Activated CD8-positive, alpha-beta T cell treated with anti-CD3 and anti-CD28 coated beads for 36 hours (primary cell): ENCODE measurements at regions of chr9 and their contacts with region 1.

Region 1: GRCh38 chr9:22119537-22120158 is 110.5 kb upstream of the CDKN2B start:
- DNase-seq: peak; percentile 33
- ATAC-seq: peak; percentile 80
- H3K4me3 Mint-ChIP-seq: no peak overlapping the region
- H3K27ac Mint-ChIP-seq: no peak overlapping the region
- H3K4me1 Mint-ChIP-seq: peaks cover 3% of the 10 kb centered on the region
- H3K27me3 Mint-ChIP-seq: peaks cover 18% of the 10 kb centered on the region
- CTCF ChIP-seq: peak; percentile 40

Region 2: DNA sequence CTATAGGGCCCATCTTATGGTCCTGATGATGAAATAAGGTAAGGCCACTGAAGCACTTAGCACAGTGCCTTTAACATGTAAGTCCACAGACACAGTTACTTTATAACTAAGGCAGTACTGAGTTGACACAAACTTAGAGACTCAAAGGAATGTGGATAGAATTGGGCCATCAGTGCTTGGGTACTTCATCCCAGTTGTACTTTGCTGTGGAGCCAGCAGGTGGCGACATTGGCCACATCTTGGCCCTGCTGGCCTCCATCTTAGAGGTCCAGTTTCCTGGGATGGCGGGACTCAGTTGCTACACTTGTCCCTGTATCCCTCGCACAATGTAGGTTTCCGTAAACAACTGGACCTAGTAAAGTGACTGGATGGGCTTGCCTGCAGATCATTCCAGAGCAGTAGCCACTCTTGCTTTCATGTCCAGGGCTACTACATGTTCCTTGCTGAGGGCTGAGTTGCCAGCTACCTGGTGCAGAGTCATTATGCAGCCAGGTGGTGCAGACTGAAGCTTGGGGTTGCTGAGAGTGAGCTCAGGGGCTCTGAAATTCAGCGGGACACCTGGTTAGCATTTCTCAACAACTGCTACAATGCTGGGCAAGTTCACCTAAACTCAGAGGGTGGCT is 306.6 kb before region 1 on chr9:
- CTCF ChIA-PET with region 1: interaction called, 71 read pairs
- POLR2A ChIA-PET with region 1: no interaction called
- intact Hi-C with region 1: loop called (anchors 2 kb)
- DNase-seq: peak; percentile 72
- ATAC-seq: peak; percentile 71
- H3K4me3 Mint-ChIP-seq: no peak overlapping the region
- H3K27ac Mint-ChIP-seq: peak overlapping the region; percentile 69
- H3K4me1 Mint-ChIP-seq: peaks cover 42% of the 10 kb centered on the region
- H3K27me3 Mint-ChIP-seq: no peaks in the 10 kb centered on the region
- CTCF ChIP-seq: peak; percentile 85

Region 3: GRCh38 chr9:22052376-22052945 is 67.2 kb before region 1 on chr9:
- CTCF ChIA-PET with region 1: interaction called, 14 read pairs
- POLR2A ChIA-PET with region 1: interaction called, 3 read pairs
- intact Hi-C with region 1: loop called (anchors 5 kb)
- DNase-seq: peak; percentile 76
- ATAC-seq: peak; percentile 89
- H3K4me3 Mint-ChIP-seq: no peak overlapping the region
- H3K27ac Mint-ChIP-seq: peak overlapping the region; percentile 65
- H3K4me1 Mint-ChIP-seq: peaks cover 34% of the 10 kb centered on the region
- H3K27me3 Mint-ChIP-seq: no peaks in the 10 kb centered on the region
- CTCF ChIP-seq: no peak

Region 4: GRCh38 chr9:22105005-22105722 is 14.5 kb before region 1 on chr9:
- CTCF ChIA-PET with region 1: interaction called, 25 read pairs
- POLR2A ChIA-PET with region 1: no interaction called
- intact Hi-C with region 1: no loop called
- DNase-seq: peak; percentile 48
- ATAC-seq: peak; percentile 97
- H3K4me3 Mint-ChIP-seq: no peak overlapping the region
- H3K27ac Mint-ChIP-seq: no peak overlapping the region
- H3K4me1 Mint-ChIP-seq: peaks cover 16% of the 10 kb centered on the region
- H3K27me3 Mint-ChIP-seq: peaks cover 3% of the 10 kb centered on the region
- CTCF ChIP-seq: no peak

Region 5: GRCh38 chr9:22238809-22239684 is 119.4 kb after region 1 on chr9:
- CTCF ChIA-PET with region 1: interaction called, 11 read pairs
- POLR2A ChIA-PET with region 1: no interaction called
- intact Hi-C with region 1: loop called (anchors 10 kb)
- DNase-seq: no peak
- ATAC-seq: no peak
- H3K4me3 Mint-ChIP-seq: no peak overlapping the region
- H3K27ac Mint-ChIP-seq: no peak overlapping the region
- H3K4me1 Mint-ChIP-seq: peaks cover 53% of the 10 kb centered on the region
- H3K27me3 Mint-ChIP-seq: peaks cover 5% of the 10 kb centered on the region
- CTCF ChIP-seq: peak; percentile 34

Region 6: DNA sequence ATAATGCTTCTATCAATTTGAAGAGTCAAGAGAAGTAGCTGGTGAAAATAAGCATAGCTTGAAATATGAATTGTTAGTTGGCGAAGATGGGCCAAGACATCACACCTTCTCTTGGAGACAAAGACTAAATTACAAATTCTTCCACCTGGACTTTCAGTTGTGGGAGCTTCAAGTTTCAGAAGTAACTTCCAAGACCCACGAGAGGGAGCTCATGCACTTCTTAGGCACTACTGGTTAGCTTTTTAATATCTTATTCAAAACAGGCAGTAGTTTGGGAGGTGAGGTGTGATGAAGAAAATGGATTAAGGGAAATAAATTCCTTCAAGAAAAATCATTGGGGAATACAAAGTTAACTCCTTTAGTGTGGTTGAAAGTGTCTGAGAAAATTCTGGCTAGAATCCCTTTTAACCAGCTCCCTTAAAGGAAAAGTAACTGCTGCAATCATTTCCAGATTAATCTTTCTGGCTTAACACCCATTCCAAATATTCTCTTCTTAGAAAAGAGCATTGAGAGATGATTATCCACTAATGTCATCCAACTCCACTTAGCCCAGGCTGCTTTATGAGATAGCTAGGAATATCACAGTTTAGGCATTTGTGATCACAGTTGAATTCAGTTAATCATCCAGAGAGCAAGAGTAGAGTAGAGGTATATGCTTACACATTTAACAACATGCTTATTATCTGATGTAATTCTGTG is 187.5 kb after region 1 on chr9:
- CTCF ChIA-PET with region 1: no interaction called
- POLR2A ChIA-PET with region 1: no interaction called
- intact Hi-C with region 1: no loop called
- DNase-seq: peak; percentile 28
- ATAC-seq: no peak
- H3K4me3 Mint-ChIP-seq: no peak overlapping the region
- H3K27ac Mint-ChIP-seq: no peak overlapping the region
- H3K4me1 Mint-ChIP-seq: no peaks in the 10 kb centered on the region
- H3K27me3 Mint-ChIP-seq: peaks cover 2% of the 10 kb centered on the region
- CTCF ChIP-seq: no peak

Region 7: GRCh38 chr9:22446950-22447617 is 327.4 kb after region 1 on chr9:
- CTCF ChIA-PET with region 1: no interaction called
- POLR2A ChIA-PET with region 1: no interaction called
- intact Hi-C with region 1: loop called (anchors 10 kb)
- DNase-seq: peak; percentile 40
- ATAC-seq: peak; percentile 88
- H3K4me3 Mint-ChIP-seq: no peak overlapping the region
- H3K27ac Mint-ChIP-seq: no peak overlapping the region
- H3K4me1 Mint-ChIP-seq: peaks cover 5% of the 10 kb centered on the region
- H3K27me3 Mint-ChIP-seq: peaks cover 41% of the 10 kb centered on the region
- CTCF ChIP-seq: no peak